Activated CD4-positive, alpha-beta memory T cell treated with anti-CD3 and anti-CD28 coated beads for 36 hours (primary cell): ENCODE measurements at regions of chr13 and their contacts with region 1.

Region 1: DNA sequence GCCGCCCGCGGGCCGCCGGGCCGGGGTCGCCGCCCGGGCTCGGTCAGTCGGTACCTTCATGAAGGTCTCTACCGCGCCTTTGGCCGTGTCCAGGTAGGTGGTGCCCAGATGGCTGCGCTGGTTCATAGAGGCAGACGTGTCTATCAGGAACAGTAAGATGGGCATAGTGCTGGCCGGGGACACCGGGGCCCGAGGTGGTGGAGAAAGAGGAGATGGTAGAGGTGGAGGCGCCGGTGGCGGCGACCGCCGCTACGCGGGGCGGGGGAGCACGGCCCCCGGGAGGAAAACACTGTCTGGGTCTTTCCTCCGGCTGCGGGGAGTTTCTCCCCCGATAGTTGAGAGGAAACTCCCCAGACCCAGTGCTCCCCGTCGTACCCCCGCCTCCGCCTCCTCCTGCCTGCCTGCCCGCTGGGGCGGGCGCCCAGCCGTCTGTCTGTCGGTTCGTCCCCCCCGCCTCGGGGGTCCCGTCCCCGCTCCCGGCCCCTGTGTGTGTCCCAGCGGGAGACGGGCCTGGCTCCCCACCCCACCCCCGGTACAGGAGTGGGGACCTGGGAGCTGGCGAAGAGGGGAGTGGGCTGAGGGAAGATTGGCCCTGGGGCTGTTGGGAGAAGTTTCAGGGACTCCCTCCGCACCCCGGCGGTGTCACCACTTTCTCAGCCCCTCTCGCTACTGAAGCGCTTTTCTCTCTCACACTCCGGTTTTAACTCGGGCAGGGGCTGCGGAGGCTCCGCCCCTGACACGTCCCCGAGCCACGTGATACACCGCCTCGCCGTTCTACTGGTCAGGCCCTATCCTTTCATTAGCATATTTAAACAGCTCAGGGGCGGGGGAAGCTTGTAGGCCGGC is at the start of gene INTS6:
- DNase-seq: peak; percentile 99
- H3K4me3 Mint-ChIP-seq: peak within 1 kb of the TSS; percentile 92
- H3K27ac Mint-ChIP-seq: peak within 1 kb of the TSS; percentile 98
- H3K4me1 Mint-ChIP-seq: peaks cover 35% of the 10 kb centered on the region
- H3K27me3 Mint-ChIP-seq: peaks cover 1% of the 10 kb centered on the region
- total RNA-seq, gene INTS6: 44.4 to 47.1 TPM

Region 2: DNA sequence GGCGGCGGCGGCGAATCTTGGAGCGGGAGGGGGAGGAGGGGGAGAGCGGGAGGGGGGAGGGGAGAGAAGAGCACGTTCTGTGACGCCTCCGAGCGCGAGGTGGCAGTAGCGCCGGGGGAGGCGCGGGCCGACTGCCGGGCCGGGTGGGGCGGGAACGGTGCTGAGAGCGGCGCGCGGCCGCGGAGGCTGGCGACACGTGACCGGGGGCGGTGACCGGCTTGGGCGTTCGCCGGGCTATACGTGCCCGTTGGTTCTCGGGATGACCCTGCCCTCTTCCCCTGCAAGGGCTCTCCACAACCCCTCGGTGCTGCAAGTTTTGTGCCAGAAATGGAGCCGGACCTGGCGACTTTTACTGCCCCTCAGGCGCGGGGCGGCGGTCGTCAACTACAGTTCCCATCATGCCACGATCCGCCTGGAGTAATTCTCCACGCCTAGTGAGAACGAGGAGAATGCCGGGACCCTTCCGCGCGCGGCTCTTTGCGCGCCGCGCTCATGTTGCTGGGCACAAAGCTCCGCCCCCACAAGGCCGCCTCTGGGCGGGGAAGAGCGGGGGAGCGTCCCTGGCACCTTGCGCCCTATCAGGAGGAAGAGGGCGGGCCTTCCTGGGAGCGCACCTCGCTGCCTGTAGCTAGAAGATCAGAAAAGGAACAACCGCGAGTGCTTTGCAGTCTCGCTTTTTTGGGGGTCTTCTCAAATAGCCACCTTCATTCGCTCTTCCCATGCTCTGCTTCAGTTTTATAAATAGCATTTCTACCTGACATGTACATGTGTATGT is 1659.8 kb before region 1 on chr13 and contains the start of gene KPNA3:
- CTCF ChIA-PET with region 1: no interaction called
- POLR2A ChIA-PET with region 1: no interaction called
- intact Hi-C with region 1: loop called (anchors 5 kb)
- DNase-seq: peak; percentile 96
- H3K4me3 Mint-ChIP-seq: peak within 1 kb of the TSS; percentile 91
- H3K27ac Mint-ChIP-seq: peak within 1 kb of the TSS; percentile 93
- H3K4me1 Mint-ChIP-seq: peaks cover 27% of the 10 kb centered on the region
- H3K27me3 Mint-ChIP-seq: no peaks in the 10 kb centered on the region
- total RNA-seq, gene KPNA3: 42.0 to 44.0 TPM

Region 3: DNA sequence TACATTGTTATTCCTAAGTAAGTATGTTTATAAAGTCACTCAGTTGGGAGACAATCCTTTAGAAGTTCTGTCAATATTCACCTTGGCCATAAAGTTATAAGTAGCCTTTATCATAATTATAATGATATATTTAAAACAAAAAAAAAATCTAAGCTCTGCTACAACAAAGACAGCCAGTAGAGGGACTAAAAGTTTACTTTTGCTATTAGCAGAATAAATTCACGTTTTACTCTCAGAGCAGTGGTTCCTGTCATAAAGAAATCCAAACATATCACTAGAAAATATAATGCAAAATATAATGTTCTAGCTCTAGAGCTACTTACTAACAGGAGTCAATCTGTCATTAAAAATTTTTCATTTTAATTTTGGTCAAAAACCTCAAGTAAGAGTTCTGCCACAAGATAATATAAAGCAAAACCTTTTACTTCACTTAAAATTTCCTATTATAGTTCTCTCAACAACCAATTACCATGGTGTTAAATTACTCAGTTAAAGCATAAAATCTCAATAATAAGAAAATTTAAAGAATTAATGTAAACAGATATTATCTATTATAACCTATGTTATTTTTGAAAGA is 17.5 kb before region 1 on chr13:
- CTCF ChIA-PET with region 1: interaction called, 4 read pairs
- POLR2A ChIA-PET with region 1: interaction called, 5 read pairs
- intact Hi-C with region 1: loop called (anchors 1 kb)
- DNase-seq: no peak
- H3K4me3 Mint-ChIP-seq: no peak overlapping the region
- H3K27ac Mint-ChIP-seq: no peak overlapping the region
- H3K4me1 Mint-ChIP-seq: peaks cover 22% of the 10 kb centered on the region
- H3K27me3 Mint-ChIP-seq: no peaks in the 10 kb centered on the region

Region 4: DNA sequence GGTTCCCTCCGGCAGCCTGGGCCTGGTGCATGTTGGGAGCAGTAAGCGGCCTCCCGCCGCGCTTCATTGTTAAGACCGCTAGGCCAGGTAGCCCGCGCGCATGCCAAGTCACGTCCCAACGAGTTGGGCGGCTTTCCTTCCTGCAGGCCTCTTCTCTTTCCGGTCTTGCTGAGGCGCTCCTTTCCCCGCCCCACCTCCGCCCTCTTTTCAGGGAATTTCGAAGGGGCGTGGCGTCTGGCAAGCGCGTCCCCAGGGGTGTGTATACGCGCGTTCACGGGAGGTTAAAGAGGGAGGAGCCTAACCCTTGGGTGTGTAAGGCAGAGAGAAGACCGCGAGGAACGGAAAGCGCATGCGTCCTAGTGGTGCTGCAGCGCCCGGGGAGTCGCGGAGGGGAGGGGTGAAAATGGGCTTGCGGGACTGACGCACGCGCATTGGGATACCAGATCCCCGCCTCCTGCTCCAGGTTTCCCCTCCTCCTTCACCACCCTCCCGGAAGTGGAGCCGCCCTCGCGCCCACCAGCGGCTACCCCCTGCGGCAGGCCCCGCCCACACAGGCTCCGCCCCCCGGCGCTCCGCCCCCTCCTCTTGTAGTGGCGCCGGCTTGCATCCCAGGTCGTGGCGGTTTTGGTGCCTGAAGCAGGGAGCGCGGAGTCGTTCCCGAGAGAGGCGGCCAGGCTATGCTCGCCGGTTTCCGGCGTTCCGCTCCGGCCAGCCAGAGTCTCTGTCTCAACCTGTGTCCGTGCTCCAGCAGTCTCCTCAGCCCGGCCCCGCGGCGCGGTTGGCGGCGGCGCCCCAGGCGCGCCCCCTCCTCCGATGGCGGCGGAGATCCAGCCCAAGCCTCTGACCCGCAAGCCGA is 131.5 kb after region 1 on chr13 and contains the start of gene WDFY2:
- CTCF ChIA-PET with region 1: interaction called, 16 read pairs
- POLR2A ChIA-PET with region 1: interaction called, 54 read pairs
- intact Hi-C with region 1: loop called (anchors 1 kb)
- DNase-seq: peak; percentile 99
- H3K4me3 Mint-ChIP-seq: peak within 1 kb of the TSS; percentile 87
- H3K27ac Mint-ChIP-seq: peak within 1 kb of the TSS; percentile 94
- H3K4me1 Mint-ChIP-seq: peaks cover 35% of the 10 kb centered on the region
- H3K27me3 Mint-ChIP-seq: no peaks in the 10 kb centered on the region
- total RNA-seq, gene WDFY2: 9.3 to 11.2 TPM

Region 5: DNA sequence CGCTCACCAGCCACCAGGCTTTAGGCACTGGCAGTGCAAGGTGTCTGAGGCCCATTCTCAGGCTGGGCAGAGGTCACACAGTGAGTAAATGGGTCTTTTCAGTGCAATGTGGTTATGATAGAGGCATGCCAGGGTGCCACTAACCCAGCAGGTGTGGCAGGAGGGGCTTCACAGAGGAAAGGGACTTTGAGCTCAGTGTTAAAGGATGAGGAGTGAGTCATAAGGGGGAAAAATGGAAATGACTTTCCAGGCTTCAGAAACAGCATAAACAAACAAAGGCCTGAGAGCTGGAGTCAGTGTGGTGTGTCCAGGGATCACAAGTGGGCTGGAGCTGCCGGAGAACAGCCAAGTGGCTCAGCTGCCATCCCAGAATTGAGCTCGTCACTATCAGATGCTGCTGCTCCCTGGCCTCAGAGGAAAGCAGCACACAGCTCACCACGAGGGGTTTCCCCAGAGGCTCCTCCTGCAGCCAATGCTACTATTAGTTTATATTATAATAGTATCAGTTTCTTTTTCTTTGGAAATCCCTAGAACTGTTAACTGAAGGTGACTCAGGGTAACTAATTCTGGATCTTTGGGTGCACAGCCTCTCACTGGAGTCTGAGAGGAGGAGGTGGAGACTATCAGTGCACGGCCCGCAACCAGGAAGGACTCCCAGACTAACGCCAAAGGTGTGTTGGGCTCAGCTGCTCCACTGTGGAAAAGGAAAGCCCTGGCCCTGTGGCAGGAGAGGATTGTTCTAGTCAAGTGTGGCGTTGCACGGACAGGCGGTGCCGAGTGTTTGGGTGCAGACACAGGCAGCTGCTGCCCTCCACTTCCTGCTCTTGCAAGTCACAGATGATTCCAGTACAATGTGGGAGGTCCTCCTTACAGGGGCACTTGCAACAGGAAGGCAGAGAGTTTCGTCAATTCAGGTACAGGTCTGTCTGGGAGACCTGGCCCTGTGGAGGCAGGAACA is 311.9 kb after region 1 on chr13:
- CTCF ChIA-PET with region 1: interaction called, 3 read pairs
- POLR2A ChIA-PET with region 1: interaction called, 14 read pairs
- intact Hi-C with region 1: loop called (anchors 1 kb)
- DNase-seq: peak; percentile 81
- H3K4me3 Mint-ChIP-seq: peak overlapping the region; percentile 77
- H3K27ac Mint-ChIP-seq: peak overlapping the region; percentile 95
- H3K4me1 Mint-ChIP-seq: peaks cover 42% of the 10 kb centered on the region
- H3K27me3 Mint-ChIP-seq: no peaks in the 10 kb centered on the region

Region 6: DNA sequence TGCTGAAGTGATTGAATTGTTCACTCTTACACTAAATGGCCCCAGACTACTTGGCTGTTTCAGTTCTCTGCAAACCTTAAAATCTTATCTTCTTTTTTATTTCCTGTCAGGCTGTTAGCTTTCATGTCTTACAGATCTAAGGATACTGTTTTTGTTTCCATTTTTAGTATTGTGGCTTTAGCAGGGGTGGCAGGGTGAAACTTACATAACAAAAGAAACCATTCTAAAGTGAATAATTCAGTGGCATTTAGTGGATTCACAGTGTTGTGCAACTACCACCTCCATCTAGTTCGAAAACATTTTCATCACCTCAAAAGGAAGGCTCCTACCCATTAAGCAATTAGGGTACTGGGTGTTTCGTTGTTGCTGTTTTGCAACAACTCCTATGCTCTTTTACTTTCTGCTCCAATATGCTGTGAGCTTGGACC is 372.6 kb after region 1 on chr13:
- CTCF ChIA-PET with region 1: no interaction called
- POLR2A ChIA-PET with region 1: interaction called, 7 read pairs
- intact Hi-C with region 1: loop called (anchors 5 kb)
- DNase-seq: no peak
- H3K4me3 Mint-ChIP-seq: peak overlapping the region; percentile 52
- H3K27ac Mint-ChIP-seq: peak overlapping the region; percentile 84
- H3K4me1 Mint-ChIP-seq: peaks cover 81% of the 10 kb centered on the region
- H3K27me3 Mint-ChIP-seq: no peaks in the 10 kb centered on the region

Region 7: DNA sequence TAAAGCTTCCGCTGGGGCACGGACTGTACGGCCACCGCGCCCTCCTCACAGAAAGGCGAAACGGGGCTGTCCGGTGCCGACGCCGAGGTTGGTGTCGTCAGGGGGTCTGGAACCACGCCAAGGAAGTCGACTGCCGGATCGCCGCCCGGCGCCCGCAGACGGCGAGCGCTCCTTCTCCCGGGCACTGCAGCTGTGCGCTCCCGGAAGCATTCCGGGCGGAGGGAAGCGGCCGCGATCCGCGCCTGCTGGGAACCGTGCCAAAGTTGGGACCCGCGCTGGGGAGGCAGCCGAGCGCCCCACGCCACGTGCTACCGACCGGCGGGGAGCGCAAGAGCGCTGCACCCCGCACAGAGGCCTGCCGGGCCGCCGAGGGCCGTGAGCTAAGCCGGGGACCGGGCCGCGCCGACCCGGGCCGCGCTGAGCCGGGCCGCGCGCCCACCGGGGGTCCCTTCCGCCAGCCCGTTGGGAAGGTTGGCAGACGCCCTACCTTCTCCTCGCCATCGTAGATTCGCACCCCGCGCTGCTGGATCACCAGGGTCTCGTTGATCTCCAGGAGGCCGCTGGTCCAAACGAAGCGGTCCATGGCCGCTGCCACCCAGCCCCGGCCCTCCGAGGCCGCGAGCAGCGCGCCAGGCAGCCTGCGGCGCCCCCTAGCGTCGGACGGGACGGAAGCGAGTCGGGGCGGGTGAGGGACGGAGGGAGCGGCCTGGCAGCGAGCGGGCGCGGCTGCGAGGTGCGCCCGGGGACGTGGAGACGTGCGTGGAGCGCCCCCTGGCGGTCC is 997.6 kb after region 1 on chr13 and contains the start of gene VPS36:
- CTCF ChIA-PET with region 1: no interaction called
- POLR2A ChIA-PET with region 1: no interaction called
- intact Hi-C with region 1: loop called (anchors 2 kb)
- DNase-seq: peak; percentile 95
- H3K4me3 Mint-ChIP-seq: peak within 1 kb of the TSS; percentile 96
- H3K27ac Mint-ChIP-seq: peak within 1 kb of the TSS; percentile 88
- H3K4me1 Mint-ChIP-seq: peaks cover 39% of the 10 kb centered on the region
- H3K27me3 Mint-ChIP-seq: peaks cover under 1% of the 10 kb centered on the region
- total RNA-seq, gene VPS36: 24.7 to 26.6 TPM